Esophagus muscularis mucosa (tissue), 4 donors: ENCODE measurements at regions of chr4 and their contacts with region 1.

Region 1: GRCh38 chr4:48779998-48780742 is at the start of gene FRYL:
- DNase-seq: peak; percentile 100
- H3K4me3 ChIP-seq: peak within 1 kb of the TSS; percentile 82 to 98 (median 93)
- H3K27ac ChIP-seq: peak within 1 kb of the TSS; percentile 93 to 98 (median 96)
- H3K4me1 ChIP-seq: peaks cover 22 to 43% (median 41%) of the 10 kb centered on the region in 4 donors
- H3K27me3 ChIP-seq: no peaks in the 10 kb centered on the region
- CTCF ChIP-seq: no peak
- EP300 ChIP-seq: no peak
- POLR2A ChIP-seq: peak; percentile 80
- total RNA-seq, gene FRYL: 46.0 to 66.5 (median 55.8) TPM

Region 2: GRCh38 chr4:48340965-48341775 is 439.0 kb before region 1 on chr4 and contains the start of gene SLAIN2:
- intact Hi-C with region 1: loop called (anchors 5 kb)
- DNase-seq: peak; percentile 99
- H3K4me3 ChIP-seq: peak within 1 kb of the TSS; percentile 76 to 94 (median 87)
- H3K27ac ChIP-seq: peak within 1 kb of the TSS; percentile 94 to 99 (median 98)
- H3K4me1 ChIP-seq: peaks cover 28 to 56% (median 50%) of the 10 kb centered on the region in 4 donors
- H3K27me3 ChIP-seq: no peaks in the 10 kb centered on the region
- CTCF ChIP-seq: peak in 2 of 3 experiments; percentile 12 to 49
- EP300 ChIP-seq: no peak
- POLR2A ChIP-seq: peak; percentile 58
- total RNA-seq, gene SLAIN2: 82.5 to 165 (median 111) TPM

Region 3: DNA sequence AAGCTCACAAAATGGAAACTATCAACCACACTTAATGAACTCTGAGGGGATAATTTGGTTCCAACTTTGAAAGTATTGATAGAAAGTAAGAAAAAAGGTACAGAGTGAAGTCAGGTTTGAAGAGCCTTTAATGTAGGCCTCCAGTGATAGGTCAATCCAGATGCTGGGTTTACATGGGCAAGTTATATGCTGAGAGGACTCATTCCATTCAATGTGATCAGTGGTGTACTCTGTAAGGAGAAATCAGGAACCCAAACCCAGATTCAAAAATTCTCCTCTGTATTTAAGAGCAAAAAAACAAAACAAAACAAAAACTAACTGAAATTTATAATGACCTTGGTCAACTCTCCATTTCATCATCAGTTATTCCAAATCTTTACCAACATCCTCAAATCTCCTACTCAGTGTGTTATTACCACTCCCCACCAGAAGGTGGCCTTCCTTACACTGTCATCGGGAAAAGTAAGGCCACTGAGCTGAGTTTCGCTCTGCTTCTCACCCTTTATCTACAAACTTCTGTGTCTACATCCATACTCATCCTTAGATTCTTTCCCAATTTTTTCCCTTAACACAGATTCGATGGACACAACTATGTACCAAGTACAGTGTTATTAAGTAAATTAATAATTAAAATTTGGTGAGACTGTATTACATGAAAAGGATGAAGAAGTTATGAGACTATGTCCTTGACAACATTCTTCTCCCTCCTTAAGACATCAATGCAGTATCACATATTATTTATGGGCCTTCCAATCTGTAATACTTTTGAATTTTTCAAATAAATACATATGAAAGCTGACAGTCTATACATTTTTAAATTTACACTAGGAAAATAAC is 201.8 kb before region 1 on chr4:
- intact Hi-C with region 1: loop called (anchors 5 kb)
- DNase-seq: no peak
- H3K4me3 ChIP-seq: no peak overlapping the region
- H3K27ac ChIP-seq: no peak overlapping the region
- H3K4me1 ChIP-seq: no peaks in the 10 kb centered on the region
- H3K27me3 ChIP-seq: no peaks in the 10 kb centered on the region
- CTCF ChIP-seq: peak; percentile 84 to 87 (median 86)
- EP300 ChIP-seq: no peak
- POLR2A ChIP-seq: no peak

Region 4: GRCh38 chr4:48653217-48654014 is 126.8 kb before region 1 on chr4:
- intact Hi-C with region 1: loop called (anchors 10 kb)
- DNase-seq: no peak
- H3K4me3 ChIP-seq: peak overlapping the region in 2 of 4 donors; percentile 3 to 7
- H3K27ac ChIP-seq: no peak overlapping the region
- H3K4me1 ChIP-seq: peaks cover 25 to 35% (median 27%) of the 10 kb centered on the region in 4 donors
- H3K27me3 ChIP-seq: no peaks in the 10 kb centered on the region
- CTCF ChIP-seq: no peak
- EP300 ChIP-seq: no peak
- POLR2A ChIP-seq: no peak

Region 5: GRCh38 chr4:48830706-48831531 is 50.7 kb after region 1 on chr4 and contains the start of gene OCIAD1:
- intact Hi-C with region 1: loop called (anchors 2 kb)
- DNase-seq: peak; percentile 98
- H3K4me3 ChIP-seq: peak within 1 kb of the TSS; percentile 79 to 96 (median 86)
- H3K27ac ChIP-seq: peak within 1 kb of the TSS; percentile 91 to 93 (median 91)
- H3K4me1 ChIP-seq: peaks cover 16 to 32% (median 22%) of the 10 kb centered on the region in 4 donors
- H3K27me3 ChIP-seq: peaks cover 0 to 2% (median 0%) of the 10 kb centered on the region in 4 donors
- CTCF ChIP-seq: no peak
- EP300 ChIP-seq: no peak
- POLR2A ChIP-seq: no peak
- total RNA-seq, gene OCIAD1: 73.7 to 95.8 (median 78.9) TPM

Region 6: DNA sequence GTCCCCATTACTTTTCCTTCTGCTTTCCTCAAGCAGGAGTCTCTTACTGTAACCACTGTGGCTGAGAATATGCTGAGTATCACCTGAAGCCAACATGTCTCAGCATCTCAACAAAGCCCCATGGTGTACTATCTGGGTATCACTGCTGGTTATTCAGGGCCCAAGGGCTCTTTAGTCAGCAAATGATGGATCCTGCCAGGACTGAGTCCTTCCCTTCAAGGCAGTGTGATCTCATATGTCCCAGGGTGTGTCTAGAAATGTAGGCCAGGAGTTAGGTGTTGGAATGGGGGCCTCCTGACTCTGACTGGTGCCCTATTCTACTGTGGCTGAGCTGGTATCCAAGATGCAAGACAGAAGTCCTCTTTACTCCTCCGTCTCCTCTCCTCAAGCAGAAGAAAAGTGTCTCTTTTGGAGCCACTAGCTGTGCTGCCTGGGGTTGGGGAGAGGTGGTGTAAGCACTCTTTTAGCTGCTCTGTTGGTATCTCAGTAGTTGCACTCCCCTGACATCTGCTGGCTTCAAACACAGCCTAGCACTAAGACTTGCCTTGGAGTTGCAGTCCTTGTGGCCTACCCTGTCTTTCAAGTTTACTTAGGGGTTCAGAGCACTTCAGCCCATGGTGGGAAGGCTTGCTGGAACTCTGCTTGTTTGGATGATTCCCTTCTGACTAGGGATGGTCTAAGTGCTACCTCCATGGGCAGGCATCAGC is 97.8 kb after region 1 on chr4:
- intact Hi-C with region 1: no loop called
- DNase-seq: no peak
- H3K4me3 ChIP-seq: no peak overlapping the region
- H3K27ac ChIP-seq: no peak overlapping the region
- H3K4me1 ChIP-seq: no peaks in the 10 kb centered on the region
- H3K27me3 ChIP-seq: no peaks in the 10 kb centered on the region
- CTCF ChIP-seq: no peak
- EP300 ChIP-seq: no peak
- POLR2A ChIP-seq: no peak

Region 7: DNA sequence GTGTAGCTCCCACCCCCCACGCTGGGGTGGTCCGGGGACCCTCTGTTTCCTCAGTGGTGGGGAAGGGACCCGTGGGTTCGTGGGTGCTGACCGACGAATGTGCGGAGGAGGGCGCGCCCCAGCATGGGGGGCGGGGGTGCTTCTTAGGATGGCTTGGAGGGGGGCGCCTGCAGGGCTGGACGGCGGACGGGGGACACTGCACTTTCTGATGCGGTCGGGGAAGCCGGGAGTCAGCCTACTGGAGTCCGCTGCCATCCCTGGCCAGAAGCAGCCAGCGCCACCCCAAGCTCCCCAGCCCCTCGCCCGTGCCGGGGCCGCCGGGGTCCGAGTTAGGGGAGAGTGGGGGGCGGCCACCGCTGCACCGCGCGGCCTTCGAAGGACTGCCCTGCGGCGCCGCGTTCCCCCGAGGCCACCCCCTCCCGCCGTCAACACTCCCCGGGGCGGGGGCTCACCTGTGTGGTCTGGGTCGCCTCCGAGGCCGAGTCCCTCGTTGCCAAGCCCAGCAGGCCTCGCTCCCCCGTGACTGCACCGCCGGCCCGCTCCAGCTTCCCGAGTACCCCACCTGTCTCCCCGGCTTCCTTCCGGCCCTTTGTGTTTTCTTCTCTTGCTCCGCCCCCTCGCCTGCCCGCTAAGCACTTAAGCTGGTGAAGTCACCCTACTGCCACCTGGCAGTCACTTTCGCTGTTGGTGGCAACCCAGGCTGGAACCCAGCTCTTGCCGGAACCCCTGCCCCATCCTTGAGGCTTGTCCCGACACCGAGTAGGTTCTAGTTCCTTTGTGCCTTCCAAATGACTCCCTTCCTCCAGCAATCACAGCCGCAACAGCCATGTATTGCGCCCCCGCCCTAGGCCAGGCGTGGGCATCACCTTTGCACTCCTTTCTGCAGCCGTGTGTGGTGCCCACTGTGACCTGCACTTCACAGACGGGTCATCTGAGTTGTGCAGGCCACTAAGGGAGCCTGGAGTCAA is 126.3 kb after region 1 on chr4 and contains the start of gene OCIAD2:
- intact Hi-C with region 1: no loop called
- DNase-seq: no peak
- H3K4me3 ChIP-seq: peak within 1 kb of the TSS; percentile 63 to 78 (median 71)
- H3K27ac ChIP-seq: no peak within 1 kb of the TSS
- H3K4me1 ChIP-seq: peaks cover 6 to 19% (median 14%) of the 10 kb centered on the region in 4 donors
- H3K27me3 ChIP-seq: no peaks in the 10 kb centered on the region
- CTCF ChIP-seq: peak in 2 of 3 experiments; percentile 10 to 23
- EP300 ChIP-seq: no peak
- POLR2A ChIP-seq: no peak
- total RNA-seq, gene OCIAD2: 3.3 to 9.5 (median 7.9) TPM